Activated CD8-positive, alpha-beta T cell treated with anti-CD3 and anti-CD28 coated beads for 36 hours (primary cell): ENCODE measurements at regions of chr7 and their contacts with region 1.

Region 1: DNA sequence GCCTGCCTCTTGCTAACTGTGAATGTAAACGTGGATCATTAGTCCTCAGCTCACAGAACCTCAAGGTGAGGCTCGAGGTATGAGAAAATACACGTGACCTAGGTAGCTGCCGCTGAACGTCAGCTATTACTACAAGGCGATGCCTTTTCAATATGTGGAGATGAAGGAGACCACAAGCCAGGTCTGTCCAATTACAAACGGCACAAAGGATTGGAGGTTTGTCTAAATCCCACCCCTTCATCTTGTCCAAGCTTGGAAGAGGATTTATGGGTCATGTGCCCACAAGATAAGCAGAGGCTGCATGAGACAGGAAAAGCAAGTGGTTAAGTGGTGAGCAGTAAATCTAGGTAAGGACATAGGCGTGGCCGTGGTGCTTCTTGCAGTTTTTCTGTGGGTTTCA is 3.4 kb downstream of the H2BK1 start:
- DNase-seq: peak; percentile 16
- ATAC-seq: peak; percentile 64
- H3K4me3 Mint-ChIP-seq: no peak overlapping the region
- H3K27ac Mint-ChIP-seq: peak overlapping the region; percentile 12
- H3K4me1 Mint-ChIP-seq: peaks cover 20% of the 10 kb centered on the region
- H3K27me3 Mint-ChIP-seq: no peaks in the 10 kb centered on the region
- CTCF ChIP-seq: no peak

Region 2: DNA sequence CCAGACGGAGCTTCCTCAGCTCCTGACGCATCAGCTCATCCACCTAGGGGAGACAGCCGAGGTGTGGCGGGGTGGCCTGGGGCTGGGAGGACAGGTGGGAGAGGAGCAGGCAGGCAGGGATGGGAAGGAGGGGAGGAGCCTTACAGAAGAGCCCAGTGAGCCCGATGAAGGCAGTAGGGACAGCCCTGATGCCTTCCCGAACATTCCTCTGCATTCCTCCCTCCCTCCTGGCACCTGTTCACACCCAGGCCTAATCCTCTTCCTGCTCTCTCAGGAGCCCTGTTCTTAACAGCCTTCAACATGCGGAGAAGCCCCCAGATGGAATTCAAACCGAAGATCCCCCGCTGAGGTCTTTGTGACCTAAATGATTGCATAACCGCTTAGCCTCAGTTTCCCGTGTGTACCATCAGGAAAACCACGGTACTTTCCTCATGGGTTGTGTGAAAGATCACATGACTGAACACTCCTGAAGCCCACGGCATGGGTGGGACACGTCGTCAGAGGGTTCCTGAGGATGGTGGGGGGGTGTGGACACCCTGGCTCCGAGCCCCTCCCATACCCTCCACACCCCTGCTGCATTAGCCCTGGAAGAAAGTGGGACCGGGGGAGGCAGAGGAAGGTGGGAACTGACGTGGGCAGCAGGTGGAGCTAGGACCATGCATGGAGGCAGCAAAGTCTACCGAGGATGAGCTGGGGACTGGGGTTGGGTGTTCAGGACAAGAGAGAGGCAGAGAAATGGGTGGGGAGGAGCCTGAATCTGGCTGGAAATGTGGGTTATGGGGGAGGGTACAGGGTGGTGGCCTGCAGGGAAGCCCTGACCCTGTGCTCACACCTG is 11.1 kb before region 1 on chr7:
- CTCF ChIA-PET with region 1: no interaction called
- POLR2A ChIA-PET with region 1: no interaction called
- intact Hi-C with region 1: no loop called
- DNase-seq: no peak
- ATAC-seq: no peak
- H3K4me3 Mint-ChIP-seq: no peak overlapping the region
- H3K27ac Mint-ChIP-seq: no peak overlapping the region
- H3K4me1 Mint-ChIP-seq: no peaks in the 10 kb centered on the region
- H3K27me3 Mint-ChIP-seq: peaks cover 2% of the 10 kb centered on the region
- CTCF ChIP-seq: no peak

Region 3: DNA sequence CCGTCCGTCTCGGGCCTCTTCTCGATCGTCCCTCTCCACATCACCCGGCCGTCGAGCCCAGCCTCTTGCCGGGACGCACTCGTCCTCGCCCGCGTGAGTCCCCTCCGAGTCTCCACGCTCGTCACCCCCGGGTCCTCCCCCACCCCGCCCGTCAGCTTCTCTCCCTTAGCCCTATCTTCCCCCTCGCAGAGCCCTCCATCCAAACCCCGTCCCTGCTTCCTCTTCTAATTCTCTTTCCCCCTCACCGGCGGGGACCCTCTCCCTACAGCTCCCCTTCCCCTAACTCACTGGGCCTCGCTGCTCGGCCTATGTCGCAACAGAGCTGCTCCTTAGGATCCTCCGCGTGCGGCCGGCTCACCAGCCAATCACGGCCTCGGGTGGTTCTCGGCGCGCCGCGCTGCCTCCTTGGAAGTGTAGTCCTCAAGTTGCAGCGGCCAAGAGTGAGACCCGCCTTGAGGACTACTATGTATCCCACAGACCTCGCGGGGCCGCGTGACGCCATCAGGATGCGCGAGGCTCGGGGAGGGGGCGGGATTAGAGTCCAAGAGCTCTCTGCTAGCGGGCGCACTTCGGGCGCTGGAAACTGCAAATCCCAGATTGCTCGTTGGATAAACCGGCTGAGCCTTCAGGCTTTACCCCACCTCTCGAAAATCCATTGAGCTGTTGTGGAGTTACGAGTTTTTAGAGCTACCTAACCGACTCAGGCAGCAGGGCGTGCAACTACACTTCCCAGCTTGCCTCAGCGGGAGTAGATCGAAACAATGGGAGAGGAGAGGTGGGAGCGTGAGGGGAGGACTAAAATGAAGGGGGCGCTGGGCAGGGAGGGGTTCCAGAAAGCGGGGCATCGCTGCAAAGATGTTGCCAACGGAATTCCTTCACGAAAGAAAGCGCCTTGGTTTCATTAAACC is 20.2 kb after region 1 on chr7 and contains the start of gene ABCF2:
- CTCF ChIA-PET with region 1: interaction called, 4 read pairs
- POLR2A ChIA-PET with region 1: interaction called, 22 read pairs
- intact Hi-C with region 1: no loop called
- DNase-seq: peak; percentile 100
- ATAC-seq: peak; percentile 99
- H3K4me3 Mint-ChIP-seq: peak within 1 kb of the TSS; percentile 99
- H3K27ac Mint-ChIP-seq: peak within 1 kb of the TSS; percentile 96
- H3K4me1 Mint-ChIP-seq: peaks cover 34% of the 10 kb centered on the region
- H3K27me3 Mint-ChIP-seq: no peaks in the 10 kb centered on the region
- CTCF ChIP-seq: no peak
- total RNA-seq, gene ABCF2: 48.1 to 56.2 TPM

Region 4: DNA sequence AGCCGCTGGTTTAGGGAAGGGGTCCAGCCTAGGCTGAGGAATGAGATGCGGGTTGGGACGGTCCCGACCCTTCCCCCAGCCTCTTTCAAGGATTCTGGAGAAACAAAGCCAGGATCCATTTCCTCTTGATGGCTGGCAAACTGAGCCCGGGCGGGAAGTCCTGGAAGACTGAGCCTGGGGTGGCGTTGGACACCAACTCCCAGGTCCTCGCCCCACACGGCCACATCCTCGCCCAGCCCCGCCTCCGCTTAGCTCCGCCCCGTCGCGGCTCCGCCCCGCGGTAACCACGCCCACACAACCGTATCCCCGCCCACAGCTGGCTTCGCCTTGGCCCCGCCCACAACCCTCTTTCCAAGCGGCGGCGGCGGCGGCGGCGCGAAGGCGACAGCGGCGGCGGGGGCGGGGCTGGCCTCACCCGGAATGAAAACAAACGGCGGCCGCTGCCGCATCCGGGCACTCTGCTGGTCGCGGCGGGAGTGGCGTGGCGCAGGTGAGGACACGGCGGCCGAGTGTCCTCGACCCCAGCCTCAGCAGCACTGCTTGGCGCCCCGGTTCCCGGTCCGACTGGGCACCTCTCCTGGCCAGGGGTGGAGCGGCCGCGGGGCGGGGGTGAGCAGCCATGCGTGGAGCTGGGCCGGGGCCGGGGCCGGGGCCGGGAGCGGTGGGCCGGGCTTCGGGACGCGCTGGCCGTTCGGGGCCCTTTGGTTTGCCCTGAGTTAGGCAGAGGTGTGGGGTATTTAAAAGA is 134.6 kb after region 1 on chr7 and contains the start of gene NUB1:
- CTCF ChIA-PET with region 1: no interaction called
- POLR2A ChIA-PET with region 1: no interaction called
- intact Hi-C with region 1: no loop called
- DNase-seq: peak; percentile 94
- ATAC-seq: peak; percentile 92
- H3K4me3 Mint-ChIP-seq: peak within 1 kb of the TSS; percentile 75
- H3K27ac Mint-ChIP-seq: peak within 1 kb of the TSS; percentile 82
- H3K4me1 Mint-ChIP-seq: peaks cover 48% of the 10 kb centered on the region
- H3K27me3 Mint-ChIP-seq: no peaks in the 10 kb centered on the region
- CTCF ChIP-seq: no peak
- total RNA-seq, gene NUB1: 41.0 to 42.5 TPM